ENCODE measurements at regions of chrX and their contacts with region 1.

Region 1: GRCh38 chrX:28756647-28757046 is 169.4 kb downstream of the IL1RAPL1 start:
- DNase-seq: no peak
- ATAC-seq: no peak
- H3K4me3 ChIP-seq: no peak overlapping the region
- H3K27ac ChIP-seq: no peak overlapping the region
- H3K4me1 ChIP-seq: no peaks in the 10 kb centered on the region
- H3K27me3 ChIP-seq: no peaks in the 10 kb centered on the region
- CTCF ChIP-seq: no peak
- POLR2A ChIP-seq: no peak

Region 2: GRCh38 chrX:28303486-28303885 is 453.2 kb before region 1 on chrX:
- in situ Hi-C with region 1: no loop called
- intact Hi-C with region 1: no loop called
- DNase-seq: no peak
- ATAC-seq: no peak
- H3K4me3 ChIP-seq: no peak overlapping the region
- H3K27ac ChIP-seq: no peak overlapping the region
- H3K4me1 ChIP-seq: no peaks in the 10 kb centered on the region
- H3K27me3 ChIP-seq: no peaks in the 10 kb centered on the region
- CTCF ChIP-seq: no peak
- POLR2A ChIP-seq: no peak

Region 3: DNA sequence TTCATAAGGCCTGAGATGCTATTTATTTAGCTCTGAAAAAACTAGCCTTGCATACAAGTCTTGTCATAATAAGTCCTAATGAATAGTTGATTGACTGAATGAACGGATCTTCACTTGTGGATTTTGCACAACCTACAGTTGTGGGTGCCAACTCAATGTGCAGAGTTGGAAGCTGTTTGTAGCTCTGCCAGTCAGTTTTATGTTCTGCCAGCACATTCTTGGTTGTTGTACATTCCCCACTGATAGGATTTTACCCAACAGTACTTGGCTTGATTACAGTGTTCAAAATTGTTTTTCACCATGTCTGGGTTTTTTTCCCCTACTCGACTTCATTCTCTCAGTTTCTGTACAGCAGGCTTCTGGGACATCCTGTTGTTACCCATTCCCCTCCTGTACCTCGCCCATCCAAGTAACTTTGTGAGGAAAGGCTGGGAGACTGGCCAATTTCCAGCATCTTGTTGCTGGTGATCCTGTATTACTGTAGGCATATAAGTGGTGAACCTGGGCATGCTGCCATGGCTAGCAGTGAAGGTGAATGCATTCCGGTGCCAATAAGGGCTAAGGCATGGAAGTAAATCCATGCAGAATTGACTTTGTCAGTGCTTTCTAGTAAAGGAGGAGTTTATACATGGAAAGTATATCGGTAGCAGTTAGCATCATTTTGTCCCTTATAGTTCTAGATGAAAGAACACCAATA is 146.6 kb before region 1 on chrX:
- in situ Hi-C with region 1: no loop called
- intact Hi-C with region 1: no loop called
- DNase-seq: no peak
- ATAC-seq: no peak
- H3K4me3 ChIP-seq: no peak overlapping the region
- H3K27ac ChIP-seq: no peak overlapping the region
- H3K4me1 ChIP-seq: no peaks in the 10 kb centered on the region
- H3K27me3 ChIP-seq: no peaks in the 10 kb centered on the region
- CTCF ChIP-seq: no peak
- POLR2A ChIP-seq: no peak

Region 4: GRCh38 chrX:28659269-28659668 is 97.4 kb before region 1 on chrX:
- in situ Hi-C with region 1: loop called in 1 of 4 experiments (anchors 25 kb)
- intact Hi-C with region 1: no loop called
- DNase-seq: no peak
- ATAC-seq: no peak
- H3K4me3 ChIP-seq: no peak overlapping the region
- H3K27ac ChIP-seq: no peak overlapping the region
- H3K4me1 ChIP-seq: no peaks in the 10 kb centered on the region
- H3K27me3 ChIP-seq: no peaks in the 10 kb centered on the region
- CTCF ChIP-seq: no peak
- POLR2A ChIP-seq: no peak